Mammary epithelial cell (primary cell): ENCODE measurements at regions of chr1 and their contacts with region 1.

Region 1: DNA sequence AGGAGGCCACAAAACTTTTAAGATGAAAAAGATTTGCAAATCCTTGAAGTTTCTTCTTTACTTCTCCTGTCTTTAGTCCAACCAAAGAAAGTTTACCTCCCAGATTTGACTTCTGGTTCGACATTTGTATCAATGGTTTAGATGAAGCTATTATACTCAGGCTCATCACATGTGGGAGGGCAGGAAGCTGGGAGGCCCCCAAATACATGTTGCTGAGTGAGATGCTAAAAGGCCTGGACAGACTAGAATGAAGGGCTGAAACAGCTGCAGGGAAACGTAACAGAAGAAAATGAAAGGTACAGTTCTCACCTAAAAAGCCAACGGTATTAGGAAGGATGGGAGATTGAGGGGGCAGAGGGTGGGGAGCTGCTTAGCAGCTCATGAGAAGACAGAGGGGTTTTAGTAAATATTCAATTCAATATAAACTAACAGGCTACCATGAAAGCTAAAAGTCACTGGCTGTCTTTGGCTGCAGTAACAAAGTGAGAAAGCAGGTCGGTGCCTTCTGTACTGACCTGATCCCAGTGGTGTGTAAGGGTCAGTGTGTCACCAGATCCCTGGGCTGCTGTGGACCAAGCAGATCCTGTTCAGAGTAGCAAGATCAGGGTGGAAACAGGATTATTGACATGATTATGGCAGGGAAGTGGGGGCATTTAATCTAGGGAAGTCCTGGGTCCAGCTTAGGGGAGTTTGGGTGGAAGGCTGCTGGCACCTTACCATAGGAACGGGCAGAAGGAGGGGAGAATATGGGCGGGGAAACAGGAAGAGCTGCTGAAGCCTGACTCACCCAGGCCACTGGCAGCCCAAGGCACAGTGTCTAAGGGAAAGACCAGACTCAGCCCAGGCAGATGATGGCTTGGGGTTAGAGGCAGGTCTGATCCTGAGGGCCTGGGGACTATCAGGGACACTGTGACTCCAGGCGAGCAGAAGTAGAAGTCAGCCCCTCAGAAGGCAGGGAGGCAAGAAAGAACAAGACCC is 60.4 kb downstream of the KCNN3 start:
- DNase-seq: peak; percentile 60
- H3K4me3 ChIP-seq: no peak overlapping the region
- H3K27ac ChIP-seq: no peak overlapping the region
- H3K4me1 ChIP-seq: peaks cover 25% of the 10 kb centered on the region
- H3K27me3 ChIP-seq: no peaks in the 10 kb centered on the region
- CTCF ChIP-seq: no peak

Region 2: DNA sequence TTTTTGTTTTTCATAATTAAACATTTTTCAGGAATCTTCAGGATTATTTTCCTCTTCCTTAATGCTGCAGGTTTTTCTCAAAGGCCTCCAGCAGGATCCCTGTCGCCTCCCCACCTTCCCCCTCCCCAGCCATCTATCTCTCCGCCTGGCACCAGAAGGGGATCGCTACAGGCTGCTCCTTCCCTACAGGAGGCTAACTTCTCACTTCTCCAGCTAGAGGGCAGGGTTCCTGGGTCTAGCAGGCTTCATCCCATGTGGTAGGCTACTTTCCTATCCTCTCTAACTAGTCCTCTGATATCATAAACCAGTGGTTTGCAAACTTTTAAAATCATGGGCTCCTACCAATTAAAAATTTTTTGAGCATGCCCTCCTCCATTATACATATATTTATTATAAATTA is 43.8 kb before region 1 on chr1:
- CTCF ChIA-PET with region 1: no interaction called
- dilution Hi-C with region 1: no loop called
- in situ Hi-C with region 1: no loop called
- intact Hi-C with region 1: loop called (anchors 5 kb)
- DNase-seq: no peak
- H3K4me3 ChIP-seq: no peak overlapping the region
- H3K27ac ChIP-seq: no peak overlapping the region
- H3K4me1 ChIP-seq: no peaks in the 10 kb centered on the region
- H3K27me3 ChIP-seq: no peaks in the 10 kb centered on the region
- CTCF ChIP-seq: peak; percentile 50 to 69